ENCODE measurements at regions of chr1 and their contacts with region 1.

Region 1: GRCh38 chr1:108570128-108570527 is 10.2 kb downstream of the EEIG2 start:
- DNase-seq: peak; percentile 37
- H3K4me3 Mint-ChIP-seq: no peak overlapping the region
- H3K27ac Mint-ChIP-seq: no peak overlapping the region
- H3K4me1 Mint-ChIP-seq: no peaks in the 10 kb centered on the region
- H3K27me3 Mint-ChIP-seq: no peaks in the 10 kb centered on the region

Region 2: DNA sequence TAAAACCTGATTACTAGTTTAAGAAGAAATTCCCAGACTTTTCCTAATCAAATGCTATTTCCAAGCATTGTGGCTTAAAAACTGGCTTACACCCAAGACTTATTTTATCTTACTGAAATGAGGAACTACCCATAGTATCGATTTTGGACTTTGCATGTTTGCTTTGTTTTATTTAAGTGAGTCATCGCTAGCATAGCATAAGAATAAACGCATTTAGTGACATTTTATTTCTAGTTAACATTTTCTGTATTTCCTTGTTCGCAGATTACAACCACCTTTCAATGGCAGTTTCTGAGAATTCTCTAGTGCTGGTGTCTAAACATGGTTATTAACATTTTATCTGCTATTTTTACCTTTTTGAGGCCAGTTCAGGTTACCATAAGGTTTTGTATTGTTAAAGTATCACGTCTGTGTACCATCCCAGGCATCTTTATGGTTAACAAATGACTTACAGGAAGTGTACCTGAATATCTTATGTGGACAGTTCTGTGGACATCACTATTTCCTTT is 14.3 kb after region 1 on chr1:
- CTCF ChIA-PET with region 1: interaction called, 10 read pairs
- POLR2A ChIA-PET with region 1: no interaction called
- intact Hi-C with region 1: loop called (anchors 2 kb)
- DNase-seq: no peak
- H3K4me3 Mint-ChIP-seq: no peak overlapping the region
- H3K27ac Mint-ChIP-seq: no peak overlapping the region
- H3K4me1 Mint-ChIP-seq: peaks cover 35% of the 10 kb centered on the region
- H3K27me3 Mint-ChIP-seq: no peaks in the 10 kb centered on the region

Region 3: GRCh38 chr1:108590957-108591356 is 20.8 kb after region 1 on chr1:
- CTCF ChIA-PET with region 1: interaction called, 10 read pairs
- POLR2A ChIA-PET with region 1: no interaction called
- intact Hi-C with region 1: loop called (anchors 2 kb)
- DNase-seq: no peak
- H3K4me3 Mint-ChIP-seq: no peak overlapping the region
- H3K27ac Mint-ChIP-seq: no peak overlapping the region
- H3K4me1 Mint-ChIP-seq: peaks cover 44% of the 10 kb centered on the region
- H3K27me3 Mint-ChIP-seq: no peaks in the 10 kb centered on the region

Region 4: DNA sequence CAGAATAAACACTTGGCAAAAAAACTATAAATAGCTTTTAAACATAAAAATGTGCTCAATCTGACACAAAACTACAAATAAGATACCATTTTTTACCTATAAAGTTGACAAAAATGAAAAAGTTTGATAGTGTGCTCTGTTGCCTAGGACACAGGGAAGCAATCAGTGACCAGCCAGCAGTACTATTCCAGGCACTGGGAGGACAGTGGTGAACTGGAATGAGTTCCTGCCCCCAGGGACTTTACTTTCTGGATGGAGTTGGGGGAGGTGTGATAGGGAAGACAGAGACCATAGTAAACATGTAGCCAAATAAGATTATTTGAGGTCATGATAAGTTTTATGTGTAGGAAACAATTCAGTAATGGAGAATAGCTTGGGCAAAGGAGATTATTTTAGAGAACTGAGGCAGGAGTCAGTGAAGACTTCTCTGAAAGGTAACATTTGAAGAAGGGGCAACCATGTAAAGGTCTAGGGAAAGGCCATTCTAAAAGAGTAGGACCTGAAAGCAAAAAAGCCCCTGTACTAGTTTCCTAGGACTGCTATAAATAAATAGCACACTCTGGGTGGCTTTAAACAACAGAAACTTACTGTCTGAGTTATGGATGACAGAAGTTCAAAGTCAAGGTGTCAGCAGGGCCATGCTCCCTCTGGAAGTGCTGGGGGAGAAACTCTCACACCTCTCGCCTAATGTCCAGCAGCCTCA is 31.7 kb after region 1 on chr1:
- CTCF ChIA-PET with region 1: no interaction called
- POLR2A ChIA-PET with region 1: no interaction called
- intact Hi-C with region 1: no loop called
- DNase-seq: no peak
- H3K4me3 Mint-ChIP-seq: no peak overlapping the region
- H3K27ac Mint-ChIP-seq: no peak overlapping the region
- H3K4me1 Mint-ChIP-seq: no peaks in the 10 kb centered on the region
- H3K27me3 Mint-ChIP-seq: no peaks in the 10 kb centered on the region

Region 5: DNA sequence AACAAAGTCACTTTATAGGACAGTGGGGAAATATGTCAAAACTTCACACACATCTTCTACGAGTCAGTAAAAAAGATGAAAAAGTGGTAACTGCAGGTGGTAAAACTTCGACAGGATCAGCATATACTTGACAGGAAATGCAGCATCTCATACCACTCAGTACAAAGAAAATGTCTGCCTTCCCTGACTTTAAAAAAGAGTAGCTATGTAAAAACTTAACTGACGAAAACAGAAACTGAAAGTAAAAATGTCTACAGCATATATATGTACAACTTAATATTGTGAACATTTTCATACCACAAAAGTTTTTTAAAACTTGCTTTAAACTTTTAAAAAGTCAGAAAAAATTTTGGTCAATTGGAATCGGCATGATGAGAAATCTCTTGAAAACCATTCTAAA is 855.3 kb after region 1 on chr1:
- CTCF ChIA-PET with region 1: no interaction called
- POLR2A ChIA-PET with region 1: no interaction called
- intact Hi-C with region 1: no loop called
- DNase-seq: no peak
- H3K4me3 Mint-ChIP-seq: peak overlapping the region; percentile 93
- H3K27ac Mint-ChIP-seq: peak overlapping the region; percentile 98
- H3K4me1 Mint-ChIP-seq: peaks cover 38% of the 10 kb centered on the region
- H3K27me3 Mint-ChIP-seq: no peaks in the 10 kb centered on the region